IMR-90 (cell line): ENCODE measurements at regions of chr9 and their contacts with region 1.

Region 1: DNA sequence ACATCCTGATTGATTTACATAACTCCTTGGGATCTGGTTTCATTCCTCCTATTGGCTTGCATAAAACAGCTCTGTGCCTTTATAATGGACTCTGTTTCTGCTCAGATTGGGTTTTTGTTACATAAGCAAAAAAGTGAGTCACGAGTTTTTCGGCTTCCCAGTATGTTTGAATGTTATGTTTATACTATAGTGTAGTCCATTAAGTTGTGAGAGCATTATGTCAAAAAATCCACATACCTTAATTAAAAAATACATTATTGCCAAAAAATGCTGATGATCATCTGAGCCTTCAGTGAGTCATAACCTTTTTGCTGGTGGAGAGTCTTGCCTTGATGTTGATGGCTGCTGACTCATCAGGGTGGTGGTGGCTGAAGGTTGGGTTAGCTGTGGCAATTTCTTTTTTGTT is 144.6 kb downstream of the CCDC171 start:
- DNase-seq: peak; percentile 95
- ATAC-seq: peak; percentile 95
- H3K4me3 ChIP-seq: no peak overlapping the region
- H3K27ac ChIP-seq: no peak overlapping the region
- H3K4me1 ChIP-seq: peaks cover 6% of the 10 kb centered on the region
- H3K27me3 ChIP-seq: no peaks in the 10 kb centered on the region
- CTCF ChIP-seq: no peak
- POLR2A ChIP-seq: no peak
- RAD21 ChIP-seq: no peak

Region 2: DNA sequence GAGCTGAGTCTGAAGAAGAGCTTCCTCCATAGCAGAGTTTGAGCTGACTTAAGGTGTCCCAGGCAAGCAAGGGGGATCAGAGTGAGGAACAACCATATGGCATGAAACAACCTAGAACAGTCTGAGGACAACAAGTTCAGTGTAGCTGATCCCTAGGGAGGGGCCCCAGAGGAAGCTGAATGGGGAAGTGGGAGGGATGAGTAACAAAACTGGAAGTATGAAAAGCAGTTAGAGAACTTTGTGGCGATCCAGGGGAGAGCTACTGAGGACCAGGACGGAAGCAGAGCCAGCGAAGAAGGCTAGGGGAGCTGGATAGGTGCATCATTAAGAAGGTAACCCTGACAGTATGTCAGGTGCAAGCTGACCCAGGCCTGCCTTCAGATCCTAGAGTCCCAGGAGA is 592.2 kb after region 1 on chr9:
- CTCF ChIA-PET with region 1: no interaction called
- POLR2A ChIA-PET with region 1: no interaction called
- dilution Hi-C with region 1: no loop called
- in situ Hi-C with region 1: no loop called
- intact Hi-C with region 1: no loop called
- DNase-seq: no peak
- ATAC-seq: no peak
- H3K4me3 ChIP-seq: no peak overlapping the region
- H3K27ac ChIP-seq: no peak overlapping the region
- H3K4me1 ChIP-seq: no peaks in the 10 kb centered on the region; the same call in 1 of the 2 replicates
- H3K27me3 ChIP-seq: peaks cover 3% of the 10 kb centered on the region; the same call in 1 of the 2 replicates
- CTCF ChIP-seq: no peak
- POLR2A ChIP-seq: no peak
- RAD21 ChIP-seq: no peak

Region 3: DNA sequence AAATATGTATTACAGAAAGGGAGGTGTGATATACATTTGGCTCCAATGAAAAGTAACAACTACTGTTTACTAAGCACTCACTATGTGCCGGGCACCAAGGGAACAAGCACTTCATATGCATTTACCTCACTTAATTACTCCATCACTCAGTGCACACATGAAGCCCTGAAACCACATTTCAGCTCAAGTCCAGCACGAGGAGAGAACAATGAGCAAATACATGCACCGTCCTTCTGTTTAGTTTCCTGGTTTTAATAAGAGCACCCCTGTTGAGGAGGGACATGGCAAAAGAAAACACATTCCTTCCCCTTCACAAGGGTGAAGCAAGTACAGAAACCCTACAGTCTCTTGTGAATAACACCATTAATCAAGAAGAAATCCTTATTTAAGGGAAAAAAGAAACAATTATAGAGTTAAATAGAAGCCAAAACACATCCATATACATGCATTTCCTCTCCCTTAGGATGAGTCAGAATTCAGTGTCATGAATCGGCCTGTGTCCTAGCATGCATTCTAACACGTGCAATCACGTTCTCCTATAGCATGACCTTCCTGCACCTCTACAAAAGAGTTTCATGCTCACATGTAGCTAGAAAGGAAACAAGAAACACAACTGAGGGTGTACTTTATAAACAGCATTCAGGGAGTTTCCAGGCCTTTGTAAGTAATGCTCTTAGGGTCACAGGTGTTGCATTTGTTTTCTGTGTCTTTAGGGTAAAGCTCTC is 761.4 kb after region 1 on chr9:
- CTCF ChIA-PET with region 1: no interaction called
- POLR2A ChIA-PET with region 1: interaction called, 20 read pairs
- dilution Hi-C with region 1: no loop called
- in situ Hi-C with region 1: no loop called
- intact Hi-C with region 1: no loop called
- DNase-seq: peak; percentile 76
- ATAC-seq: peak; percentile 79
- H3K4me3 ChIP-seq: no peak overlapping the region
- H3K27ac ChIP-seq: peak overlapping the region; percentile 45; the same call in 1 of the 2 replicates
- H3K4me1 ChIP-seq: peaks cover 11% of the 10 kb centered on the region
- H3K27me3 ChIP-seq: no peaks in the 10 kb centered on the region
- CTCF ChIP-seq: no peak
- POLR2A ChIP-seq: no peak
- RAD21 ChIP-seq: no peak